ENCODE measurements at regions of chr1 and their contacts with region 1.

Region 1: DNA sequence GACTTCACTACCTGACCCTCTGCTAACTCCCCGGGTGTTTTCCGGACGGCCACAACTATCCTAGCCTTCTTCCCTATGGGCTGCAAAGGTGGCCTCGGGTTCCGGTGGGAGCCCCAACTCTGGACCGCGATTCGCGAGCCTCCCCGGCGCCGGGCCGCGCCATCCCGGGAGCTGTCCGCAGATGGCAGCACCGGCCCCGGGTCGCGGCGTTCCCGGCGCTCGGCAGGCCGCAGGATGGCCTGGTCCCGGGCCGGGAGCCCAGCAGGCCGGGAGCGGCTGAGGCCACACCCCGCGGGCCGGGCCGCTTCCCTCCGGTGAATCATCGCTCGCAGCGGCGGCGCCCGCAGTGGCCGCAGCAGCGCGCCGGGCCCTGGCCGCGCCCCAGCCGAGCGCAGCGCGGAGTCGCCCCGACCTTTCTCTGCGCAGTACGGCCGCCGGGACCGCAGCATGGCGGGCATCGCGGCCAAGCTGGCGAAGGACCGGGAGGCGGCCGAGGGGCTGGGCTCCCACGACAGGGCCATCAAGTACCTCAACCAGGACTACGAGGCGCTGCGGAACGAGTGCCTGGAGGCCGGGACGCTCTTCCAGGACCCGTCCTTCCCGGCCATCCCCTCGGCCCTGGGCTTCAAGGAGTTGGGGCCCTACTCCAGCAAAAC is at the start of gene CAPN2:
- DNase-seq: peak; percentile 68 to 80
- ATAC-seq: peak; percentile 59 to 72 (median 70)
- H3K4me3 ChIP-seq: peak within 1 kb of the TSS; percentile 89
- H3K4me3 Mint-ChIP-seq: peak within 1 kb of the TSS; percentile 82
- H3K27ac ChIP-seq: peak within 1 kb of the TSS; percentile 83
- H3K27ac Mint-ChIP-seq: peak within 1 kb of the TSS; percentile 92 to 94
- H3K4me1 ChIP-seq: peaks cover 52% of the 10 kb centered on the region
- H3K4me1 Mint-ChIP-seq: peaks cover 49 to 53% of the 10 kb centered on the region in 2 donors
- H3K27me3 ChIP-seq: no peaks in the 10 kb centered on the region
- H3K27me3 Mint-ChIP-seq: no peaks in the 10 kb centered on the region
- CTCF ChIP-seq: peak; percentile 21
- total RNA-seq, gene CAPN2: 228 to 275 (median 236) TPM

Region 2: DNA sequence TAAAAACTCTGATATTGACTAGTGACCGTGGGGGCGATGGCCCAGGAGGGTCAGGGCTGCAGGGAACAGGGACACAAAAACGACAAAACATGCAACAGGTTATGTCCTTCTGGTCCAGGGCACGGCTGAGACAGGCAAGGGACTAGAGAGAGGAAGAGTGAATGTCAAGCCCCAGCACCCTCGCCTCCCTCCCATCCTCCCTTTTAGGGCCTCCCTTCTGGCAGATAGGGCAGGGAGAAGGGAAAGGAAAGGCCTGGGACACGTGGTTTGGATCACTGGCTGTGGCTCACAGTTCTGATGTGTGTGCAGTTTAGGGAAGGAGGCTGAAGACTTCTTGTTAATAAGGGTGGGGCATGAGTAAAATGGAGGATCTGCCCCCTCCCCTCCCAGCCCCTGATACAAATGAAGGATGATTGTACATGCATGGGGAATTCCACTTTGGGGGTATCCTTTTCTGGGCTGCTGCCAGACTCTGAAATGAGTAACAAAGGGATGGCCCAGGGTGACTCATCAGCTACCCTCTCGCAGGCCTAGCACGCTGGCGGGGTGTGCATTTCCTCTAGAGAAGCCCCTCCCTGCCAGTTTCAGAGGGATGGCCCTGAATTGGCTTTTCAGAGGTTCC is 14.2 kb after region 1 on chr1:
- intact Hi-C with region 1: loop called (anchors 1 kb)
- DNase-seq: peak; percentile 79 to 94
- ATAC-seq: peak; percentile 92 to 96 (median 96)
- H3K4me3 ChIP-seq: no peak overlapping the region
- H3K4me3 Mint-ChIP-seq: peak overlapping the region; percentile 89
- H3K27ac ChIP-seq: peak overlapping the region; percentile 88
- H3K27ac Mint-ChIP-seq: peak overlapping the region; percentile 95 to 99
- H3K4me1 ChIP-seq: peaks cover 43% of the 10 kb centered on the region
- H3K4me1 Mint-ChIP-seq: peaks cover 77 to 86% of the 10 kb centered on the region in 2 donors
- H3K27me3 ChIP-seq: no peaks in the 10 kb centered on the region
- H3K27me3 Mint-ChIP-seq: no peaks in the 10 kb centered on the region
- CTCF ChIP-seq: no peak

Region 3: DNA sequence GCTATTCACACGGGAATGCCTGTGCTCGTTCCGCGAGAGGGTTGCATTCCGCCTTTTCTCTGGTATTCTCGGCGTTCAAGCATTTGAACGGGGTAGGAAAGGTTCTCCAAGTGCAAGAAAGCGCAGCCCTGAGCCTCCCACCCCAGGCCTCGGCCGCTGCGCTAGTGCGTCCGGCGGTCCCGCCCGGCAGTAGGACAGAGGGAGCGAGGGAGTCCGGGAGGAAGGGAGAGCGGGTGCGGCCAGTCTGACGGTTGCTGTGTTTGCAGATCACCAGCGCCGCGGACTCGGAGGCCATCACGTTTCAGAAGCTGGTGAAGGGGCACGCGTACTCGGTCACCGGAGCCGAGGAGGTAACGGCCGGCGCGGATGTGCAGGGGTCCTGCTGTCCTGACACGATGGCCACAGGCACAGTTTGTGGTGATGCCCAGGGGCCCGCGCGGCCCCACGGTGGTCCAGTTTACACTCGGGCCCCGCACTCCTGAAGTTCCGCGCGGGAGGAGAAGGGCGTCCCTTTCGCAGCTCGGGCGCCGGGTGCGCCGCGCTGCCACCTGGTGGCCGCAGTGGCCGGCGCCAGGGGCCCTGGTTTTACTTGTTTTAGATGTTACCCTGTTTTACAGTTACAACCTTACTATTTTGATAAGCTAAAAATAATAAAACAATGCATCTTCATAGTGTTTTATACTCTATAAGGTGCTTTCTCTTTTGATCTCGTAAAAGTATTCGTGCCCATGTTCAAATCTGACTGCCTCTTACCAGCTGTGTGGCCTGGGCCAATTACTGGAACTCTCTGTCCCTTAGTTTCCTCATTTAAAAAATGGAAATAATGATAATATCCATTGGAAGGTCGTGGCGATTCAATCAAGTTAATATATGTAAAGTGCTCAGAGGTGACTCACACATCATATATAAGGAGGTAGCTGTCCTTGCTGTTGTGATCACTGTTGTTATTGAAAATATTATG is 36.7 kb after region 1 on chr1:
- intact Hi-C with region 1: loop called (anchors 2 kb)
- DNase-seq: peak; percentile 70 to 84
- ATAC-seq: peak; percentile 82 to 96 (median 90)
- H3K4me3 ChIP-seq: peak overlapping the region; percentile 37
- H3K4me3 Mint-ChIP-seq: peak overlapping the region; percentile 82
- H3K27ac ChIP-seq: no peak overlapping the region
- H3K27ac Mint-ChIP-seq: peak overlapping the region; percentile 10 to 72
- H3K4me1 ChIP-seq: peaks cover 12% of the 10 kb centered on the region
- H3K4me1 Mint-ChIP-seq: peaks cover 12 to 22% of the 10 kb centered on the region in 2 donors
- H3K27me3 ChIP-seq: no peaks in the 10 kb centered on the region
- H3K27me3 Mint-ChIP-seq: no peaks in the 10 kb centered on the region
- CTCF ChIP-seq: peak; percentile 93

Region 4: GRCh38 chr1:223845810-223846682 is 133.7 kb after region 1 on chr1 and contains the start of gene TP53BP2:
- intact Hi-C with region 1: loop called (anchors 5 kb)
- DNase-seq: peak; percentile 84 to 93
- ATAC-seq: peak; percentile 81 to 92 (median 85)
- H3K4me3 ChIP-seq: peak within 1 kb of the TSS; percentile 64
- H3K4me3 Mint-ChIP-seq: peak within 1 kb of the TSS; percentile 94
- H3K27ac ChIP-seq: peak within 1 kb of the TSS; percentile 97
- H3K27ac Mint-ChIP-seq: peak within 1 kb of the TSS; percentile 94 to 97
- H3K4me1 ChIP-seq: peaks cover 16% of the 10 kb centered on the region
- H3K4me1 Mint-ChIP-seq: peaks cover 32% of the 10 kb centered on the region in 2 donors
- H3K27me3 ChIP-seq: no peaks in the 10 kb centered on the region
- H3K27me3 Mint-ChIP-seq: peaks cover 0 to 6% of the 10 kb centered on the region in 2 donors
- CTCF ChIP-seq: peak; percentile 24
- total RNA-seq, gene TP53BP2: 69.7 to 93.7 (median 78.8) TPM

Measured in natural killer cell (primary cell).